CD4-positive, alpha-beta memory T cell (primary cell): ENCODE measurements at regions of chr9 and their contacts with region 1.

Region 1: DNA sequence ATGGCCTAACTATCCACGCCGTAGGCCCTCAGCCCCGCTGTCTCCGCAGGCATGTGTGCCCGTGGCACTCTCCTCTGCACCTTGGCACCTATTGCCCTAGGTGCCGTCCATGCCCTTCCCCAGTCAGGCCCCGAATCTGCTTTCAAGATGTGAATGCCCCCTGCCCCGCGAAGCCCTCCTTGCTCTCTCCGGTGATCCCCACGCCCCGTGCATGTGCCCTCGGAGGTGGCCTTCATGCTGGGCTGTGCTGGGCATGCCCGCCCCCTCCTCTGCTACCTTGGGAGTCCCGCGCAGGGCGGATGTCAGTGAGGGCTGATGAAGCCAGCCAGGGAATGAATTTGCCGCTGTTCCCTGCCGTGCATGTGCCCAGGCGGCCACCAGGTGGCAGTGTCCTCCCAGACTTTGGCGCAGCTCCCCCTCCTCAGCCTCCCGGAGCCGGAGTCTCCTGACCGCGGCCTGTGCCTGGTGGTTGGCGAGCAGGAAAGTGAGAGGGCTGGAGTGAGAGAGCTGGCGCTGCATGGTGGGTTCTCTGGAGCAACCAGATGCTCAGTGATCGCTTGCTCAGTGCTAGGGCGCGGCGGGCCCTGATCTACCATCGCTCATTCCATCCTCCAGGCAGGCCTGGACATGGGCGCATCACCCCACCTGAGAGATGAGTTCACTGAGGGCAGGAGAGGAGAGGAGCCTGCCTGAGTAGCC is 112.9 kb upstream of the LMX1B start:
- DNase-seq: peak; percentile 53 to 68 (median 62)
- H3K4me3 ChIP-seq: no peak overlapping the region
- H3K4me3 Mint-ChIP-seq: peak overlapping the region in 5 of 8 donors; percentile 21 to 77 (median 31)
- H3K27ac ChIP-seq: no peak overlapping the region
- H3K27ac Mint-ChIP-seq: no peak overlapping the region
- H3K4me1 ChIP-seq: peaks cover 6% of the 10 kb centered on the region
- H3K4me1 Mint-ChIP-seq: peaks cover 2 to 11% (median 5%) of the 10 kb centered on the region in 4 donors
- H3K27me3 ChIP-seq: peaks cover 5% of the 10 kb centered on the region
- H3K27me3 Mint-ChIP-seq: peaks cover 2 to 4% of the 10 kb centered on the region in 2 donors

Region 2: DNA sequence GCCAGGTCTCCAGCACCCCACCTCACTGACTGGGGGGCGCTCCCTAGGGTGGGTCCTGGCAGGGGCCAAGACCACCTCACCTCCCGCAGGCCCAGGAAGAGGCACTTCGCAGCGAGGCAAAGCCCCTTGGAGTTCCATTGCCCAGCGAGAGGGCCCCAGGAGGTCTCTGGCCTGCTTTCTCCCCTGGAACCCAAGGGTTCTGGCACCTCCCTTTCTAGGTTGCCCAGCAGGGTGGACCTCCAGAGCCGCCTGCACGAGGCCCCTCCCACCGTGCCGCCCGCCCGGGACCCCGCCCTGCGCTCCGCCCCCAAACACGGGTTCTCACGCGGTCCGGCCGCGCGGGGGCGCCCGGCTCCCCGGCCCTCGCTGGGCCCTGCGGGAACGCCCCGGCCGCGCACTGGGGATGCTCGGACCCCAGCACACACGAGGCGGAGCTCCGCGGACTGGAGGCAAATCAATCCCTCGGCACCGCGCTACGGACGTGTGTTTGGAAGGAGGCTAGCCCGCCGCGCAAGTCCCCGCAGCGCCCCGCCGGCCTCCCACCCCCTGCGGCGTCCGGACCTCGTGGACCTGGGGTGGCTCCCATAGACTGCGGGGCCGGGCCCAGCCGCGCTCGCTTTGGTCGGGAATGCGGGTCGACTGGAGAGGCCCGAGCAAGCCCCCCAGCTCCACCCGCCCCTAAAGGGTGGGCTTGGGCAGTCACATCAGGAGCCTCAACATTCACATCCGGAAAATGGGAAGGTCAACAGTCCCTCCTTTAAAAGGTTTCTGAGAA is 13.4 kb after region 1 on chr9:
- CTCF ChIA-PET with region 1: interaction called, 35 read pairs
- POLR2A ChIA-PET with region 1: interaction called, 4 read pairs
- intact Hi-C with region 1: no loop called
- DNase-seq: peak in 4 of 5 donors; percentile 40 to 52 (median 51)
- H3K4me3 ChIP-seq: no peak overlapping the region
- H3K4me3 Mint-ChIP-seq: peak overlapping the region in 2 of 8 donors; percentile 26 to 48
- H3K27ac ChIP-seq: no peak overlapping the region
- H3K27ac Mint-ChIP-seq: peak overlapping the region in 1 of 7 donors; percentile 19
- H3K4me1 ChIP-seq: peaks cover 33% of the 10 kb centered on the region
- H3K4me1 Mint-ChIP-seq: peaks cover 16 to 48% (median 28%) of the 10 kb centered on the region in 4 donors
- H3K27me3 ChIP-seq: peaks cover 12% of the 10 kb centered on the region
- H3K27me3 Mint-ChIP-seq: peaks cover 17 to 31% of the 10 kb centered on the region in 2 donors

Region 3: DNA sequence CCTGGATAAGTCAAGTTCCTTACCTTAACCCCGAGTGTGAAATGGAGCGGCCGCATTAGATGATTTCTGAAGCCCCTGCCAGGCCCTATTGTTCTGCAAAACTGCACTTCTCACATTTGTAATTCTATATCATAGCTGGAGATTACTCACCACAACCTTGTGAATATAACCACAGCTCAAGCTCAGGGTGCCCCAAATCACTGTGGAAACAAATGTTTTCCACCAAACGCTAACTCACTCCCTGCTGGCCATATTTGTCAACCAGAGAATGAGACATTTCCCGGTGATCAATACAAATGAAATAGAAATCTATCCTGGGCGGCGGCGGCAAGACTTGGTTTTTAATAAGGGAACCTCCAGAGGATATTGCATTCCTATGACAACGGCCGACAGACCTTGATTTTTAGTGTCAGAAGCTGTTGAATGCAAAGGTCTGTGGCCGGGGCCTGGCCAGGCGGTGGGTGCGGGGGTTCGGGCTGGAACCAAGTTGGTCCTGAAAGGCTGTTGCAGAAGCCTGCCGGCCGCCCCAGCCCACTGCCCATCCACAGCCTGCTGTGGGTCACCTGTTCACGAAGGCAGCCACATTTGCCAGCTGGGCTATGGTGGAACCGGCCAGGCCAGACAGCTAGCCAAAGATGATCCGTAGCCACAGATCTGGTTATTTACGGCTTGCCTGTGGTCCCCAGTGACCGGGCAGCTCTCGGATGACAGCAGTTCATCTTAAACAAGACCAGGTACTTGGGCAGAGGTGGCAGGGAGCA is 19.0 kb after region 1 on chr9:
- CTCF ChIA-PET with region 1: interaction called, 13 read pairs
- POLR2A ChIA-PET with region 1: interaction called, 4 read pairs
- intact Hi-C with region 1: no loop called
- DNase-seq: no peak
- H3K4me3 ChIP-seq: no peak overlapping the region
- H3K4me3 Mint-ChIP-seq: peak overlapping the region in 4 of 8 donors; percentile 2 to 66 (median 16)
- H3K27ac ChIP-seq: no peak overlapping the region
- H3K27ac Mint-ChIP-seq: peak overlapping the region in 4 of 7 donors; percentile 1 to 76 (median 32)
- H3K4me1 ChIP-seq: peaks cover 36% of the 10 kb centered on the region
- H3K4me1 Mint-ChIP-seq: peaks cover 33 to 71% (median 48%) of the 10 kb centered on the region in 4 donors
- H3K27me3 ChIP-seq: no peaks in the 10 kb centered on the region
- H3K27me3 Mint-ChIP-seq: peaks cover 8 to 16% of the 10 kb centered on the region in 2 donors

Region 4: DNA sequence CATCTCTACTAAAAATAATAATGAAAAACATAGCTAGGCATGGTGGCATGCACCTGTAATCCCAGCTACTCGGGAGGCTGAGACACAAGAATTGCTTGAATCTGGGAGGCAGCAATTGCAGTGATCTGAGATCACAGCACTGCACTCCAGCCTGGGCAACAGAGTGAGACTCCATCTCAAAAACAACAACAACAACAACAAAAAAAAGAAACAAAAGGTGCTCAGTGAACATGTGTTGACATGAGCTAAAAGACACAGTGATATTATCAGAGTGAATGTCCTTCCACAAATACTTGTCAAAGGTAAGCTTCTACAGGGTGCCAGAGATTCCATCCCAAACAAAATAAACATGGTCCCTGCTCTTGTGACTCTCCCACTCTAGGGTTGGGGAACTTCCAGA is 37.7 kb after region 1 on chr9:
- CTCF ChIA-PET with region 1: interaction called, 10 read pairs
- POLR2A ChIA-PET with region 1: no interaction called
- intact Hi-C with region 1: no loop called
- DNase-seq: no peak
- H3K4me3 ChIP-seq: no peak overlapping the region
- H3K4me3 Mint-ChIP-seq: no peak overlapping the region
- H3K27ac ChIP-seq: no peak overlapping the region
- H3K27ac Mint-ChIP-seq: no peak overlapping the region
- H3K4me1 ChIP-seq: no peaks in the 10 kb centered on the region
- H3K4me1 Mint-ChIP-seq: no peaks in the 10 kb centered on the region
- H3K27me3 ChIP-seq: no peaks in the 10 kb centered on the region
- H3K27me3 Mint-ChIP-seq: peaks cover 7 to 18% of the 10 kb centered on the region in 2 donors

Region 5: GRCh38 chr9:126550891-126551351 is 50.1 kb after region 1 on chr9:
- CTCF ChIA-PET with region 1: interaction called, 266 read pairs
- POLR2A ChIA-PET with region 1: interaction called, 3 read pairs
- intact Hi-C with region 1: no loop called
- DNase-seq: no peak
- H3K4me3 ChIP-seq: no peak overlapping the region
- H3K4me3 Mint-ChIP-seq: no peak overlapping the region
- H3K27ac ChIP-seq: no peak overlapping the region
- H3K27ac Mint-ChIP-seq: no peak overlapping the region
- H3K4me1 ChIP-seq: no peaks in the 10 kb centered on the region
- H3K4me1 Mint-ChIP-seq: no peaks in the 10 kb centered on the region
- H3K27me3 ChIP-seq: no peaks in the 10 kb centered on the region
- H3K27me3 Mint-ChIP-seq: no peaks in the 10 kb centered on the region

Region 6: GRCh38 chr9:126558051-126558665 is 57.3 kb after region 1 on chr9:
- CTCF ChIA-PET with region 1: interaction called, 266 read pairs
- POLR2A ChIA-PET with region 1: interaction called, 7 read pairs
- intact Hi-C with region 1: loop called (anchors 1 kb)
- DNase-seq: peak; percentile 51 to 68 (median 56)
- H3K4me3 ChIP-seq: no peak overlapping the region
- H3K4me3 Mint-ChIP-seq: no peak overlapping the region
- H3K27ac ChIP-seq: no peak overlapping the region
- H3K27ac Mint-ChIP-seq: peak overlapping the region in 1 of 7 donors; percentile 57
- H3K4me1 ChIP-seq: no peaks in the 10 kb centered on the region
- H3K4me1 Mint-ChIP-seq: peaks cover 0 to 1% (median 0%) of the 10 kb centered on the region in 4 donors
- H3K27me3 ChIP-seq: peaks cover 6% of the 10 kb centered on the region
- H3K27me3 Mint-ChIP-seq: peaks cover 15 to 24% of the 10 kb centered on the region in 2 donors

Region 7: DNA sequence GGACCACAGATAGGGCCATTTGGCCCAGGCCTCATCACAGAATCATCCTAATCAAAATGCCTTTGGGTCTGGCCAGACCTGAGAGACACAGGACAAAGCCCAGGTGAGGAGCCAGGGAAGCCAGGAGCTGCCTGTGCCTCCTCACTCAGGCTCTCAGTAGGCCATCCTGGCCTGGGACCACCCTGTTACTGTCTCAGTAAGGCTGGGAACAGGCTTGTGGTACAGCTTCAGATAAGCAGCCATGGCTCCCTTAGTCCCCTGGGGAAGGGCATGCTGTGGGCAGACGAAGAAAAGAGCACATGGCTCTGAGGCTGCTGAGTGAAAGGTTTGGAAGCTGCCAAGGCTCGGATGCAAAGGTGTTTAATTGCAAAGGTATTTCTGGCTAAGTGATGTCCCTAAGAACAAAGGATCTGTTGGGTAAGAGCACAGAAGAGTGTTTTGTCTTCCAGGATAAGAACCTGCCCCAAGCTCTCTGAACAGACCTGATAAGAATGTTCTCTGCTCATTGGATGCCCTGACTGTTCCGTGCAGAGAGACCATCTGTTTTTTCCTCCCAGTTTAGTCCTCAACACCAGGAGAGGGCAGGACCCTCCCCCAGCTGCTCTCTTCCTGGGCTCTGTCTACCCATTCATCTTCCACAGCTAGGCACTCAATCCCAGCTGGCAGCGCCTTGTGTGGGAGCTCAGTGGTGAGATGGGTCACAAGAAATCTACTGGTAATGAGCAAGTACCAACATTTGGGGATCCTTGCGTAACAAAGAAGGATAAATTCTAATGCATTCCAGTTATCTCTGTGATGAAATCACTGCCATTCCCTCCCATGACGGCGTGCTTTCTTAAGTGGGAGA is 603.9 kb after region 1 on chr9:
- CTCF ChIA-PET with region 1: no interaction called
- POLR2A ChIA-PET with region 1: no interaction called
- intact Hi-C with region 1: no loop called
- DNase-seq: no peak
- H3K4me3 ChIP-seq: no peak overlapping the region
- H3K4me3 Mint-ChIP-seq: no peak overlapping the region
- H3K27ac ChIP-seq: no peak overlapping the region
- H3K27ac Mint-ChIP-seq: peak overlapping the region in 1 of 7 donors; percentile 36
- H3K4me1 ChIP-seq: no peaks in the 10 kb centered on the region
- H3K4me1 Mint-ChIP-seq: peaks cover 0 to 2% (median 0%) of the 10 kb centered on the region in 4 donors
- H3K27me3 ChIP-seq: no peaks in the 10 kb centered on the region
- H3K27me3 Mint-ChIP-seq: no peaks in the 10 kb centered on the region